Esophagus muscularis mucosa (tissue), 4 donors: ENCODE measurements at regions of chr3 and their contacts with region 1.

Region 1: DNA sequence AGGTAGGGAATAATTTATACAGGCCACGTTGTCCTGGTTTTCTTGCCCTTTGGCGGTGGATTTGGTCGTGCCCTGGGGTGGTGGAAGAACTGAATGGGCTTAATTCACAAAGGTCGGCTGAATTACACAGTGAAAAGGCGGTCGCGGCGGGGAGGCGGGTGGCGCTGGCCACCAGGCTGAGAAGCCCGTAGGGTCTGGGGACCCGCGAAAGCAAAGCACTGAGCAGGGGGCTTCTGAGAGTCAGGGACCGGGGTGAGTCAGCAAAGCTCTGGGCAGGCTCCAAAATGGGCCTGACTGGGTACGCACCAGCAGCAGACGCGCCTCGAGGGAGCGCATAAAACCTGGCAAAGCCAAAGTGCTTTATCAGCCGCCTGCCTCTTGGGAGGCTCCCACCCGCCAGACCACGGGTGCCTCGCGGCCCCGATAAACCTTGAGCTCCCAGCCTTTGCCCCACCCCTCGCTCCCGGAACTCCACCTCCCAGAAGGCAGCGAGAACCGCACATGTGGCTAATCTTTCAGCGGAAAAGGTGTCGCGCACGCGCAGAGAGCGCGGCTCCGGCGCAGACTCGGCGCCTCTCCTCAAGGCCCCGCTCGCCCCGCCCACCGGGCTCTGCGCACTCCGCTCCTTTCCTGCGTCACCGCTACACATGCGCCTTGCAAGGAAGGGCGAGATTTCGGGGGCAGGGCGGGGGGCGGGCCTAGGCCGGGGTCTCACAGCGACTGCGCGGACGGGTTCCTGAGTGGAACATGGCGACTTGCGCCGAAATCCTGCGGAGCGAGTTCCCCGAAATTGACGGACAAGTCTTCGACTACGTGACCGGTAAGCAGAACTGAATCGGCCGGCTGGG is at the start of gene ABCF3:
- DNase-seq: peak; percentile 100
- H3K4me3 ChIP-seq: peak within 1 kb of the TSS; percentile 77 to 90 (median 84)
- H3K27ac ChIP-seq: peak within 1 kb of the TSS; percentile 82 to 88 (median 86)
- H3K4me1 ChIP-seq: peaks cover 32 to 38% (median 36%) of the 10 kb centered on the region in 4 donors
- H3K27me3 ChIP-seq: no peaks in the 10 kb centered on the region
- CTCF ChIP-seq: no peak
- EP300 ChIP-seq: no peak
- POLR2A ChIP-seq: peak; percentile 87
- total RNA-seq, gene ABCF3: 34.8 to 43.2 (median 36.9) TPM

Region 2: GRCh38 chr3:183930086-183930485 is 255.6 kb before region 1 on chr3:
- intact Hi-C with region 1: no loop called
- DNase-seq: no peak
- H3K4me3 ChIP-seq: no peak overlapping the region
- H3K27ac ChIP-seq: no peak overlapping the region
- H3K4me1 ChIP-seq: no peaks in the 10 kb centered on the region
- H3K27me3 ChIP-seq: no peaks in the 10 kb centered on the region
- CTCF ChIP-seq: no peak
- EP300 ChIP-seq: no peak
- POLR2A ChIP-seq: no peak

Region 3: GRCh38 chr3:184145111-184145524 is 40.6 kb before region 1 on chr3:
- intact Hi-C with region 1: loop called (anchors 5 kb)
- DNase-seq: no peak
- H3K4me3 ChIP-seq: no peak overlapping the region
- H3K27ac ChIP-seq: peak overlapping the region in 1 of 4 donors; percentile 22
- H3K4me1 ChIP-seq: peaks cover 4 to 11% (median 8%) of the 10 kb centered on the region in 4 donors
- H3K27me3 ChIP-seq: no peaks in the 10 kb centered on the region
- CTCF ChIP-seq: peak; percentile 43 to 53 (median 47)
- EP300 ChIP-seq: no peak
- POLR2A ChIP-seq: no peak

Region 4: DNA sequence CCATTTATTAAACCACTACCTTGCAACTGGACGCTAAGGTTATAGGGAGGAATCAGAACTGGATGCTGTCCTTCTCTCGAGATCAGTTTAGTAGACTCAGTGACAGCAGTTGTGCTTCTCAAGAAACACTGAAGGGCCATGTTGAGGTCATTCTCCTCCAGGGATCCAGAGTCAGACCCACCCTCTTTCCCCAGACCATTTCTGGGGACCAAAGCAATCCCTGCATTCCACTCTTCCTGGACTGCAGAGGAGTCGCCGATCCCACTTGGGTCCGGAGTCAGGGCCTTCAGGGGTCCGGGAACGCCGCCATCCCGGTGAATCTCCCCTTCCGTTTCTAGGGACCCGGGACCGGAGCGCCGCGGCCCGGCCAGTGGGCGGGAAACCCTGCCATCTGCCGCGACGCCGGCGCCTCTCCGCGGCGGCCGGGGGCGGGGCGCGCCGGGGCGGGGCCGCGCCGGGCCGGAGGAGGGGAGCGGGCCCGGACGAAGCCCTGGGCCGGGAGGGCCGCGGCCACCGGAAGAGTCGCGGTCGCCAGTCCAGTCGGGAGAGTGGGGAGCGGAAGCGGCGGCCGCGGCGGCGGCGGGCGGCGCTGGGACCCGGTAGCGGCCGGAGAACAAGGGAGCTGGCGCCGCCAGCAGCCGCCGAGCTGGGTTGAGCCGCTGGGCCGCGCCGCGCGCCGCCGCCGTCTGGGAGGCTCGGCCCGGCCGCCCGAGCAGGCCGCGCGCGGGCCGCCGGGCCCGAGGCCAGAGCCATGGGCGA is 30.6 kb before region 1 on chr3 and contains the start of gene DVL3:
- intact Hi-C with region 1: loop called (anchors 1 kb)
- DNase-seq: no peak
- H3K4me3 ChIP-seq: peak within 1 kb of the TSS; percentile 70 to 98 (median 96)
- H3K27ac ChIP-seq: peak within 1 kb of the TSS; percentile 89 to 96 (median 95)
- H3K4me1 ChIP-seq: peaks cover 49 to 55% (median 54%) of the 10 kb centered on the region in 4 donors
- H3K27me3 ChIP-seq: no peaks in the 10 kb centered on the region
- CTCF ChIP-seq: no peak
- EP300 ChIP-seq: no peak
- POLR2A ChIP-seq: no peak
- total RNA-seq, gene DVL3: 64.0 to 119 (median 86.3) TPM

Region 5: DNA sequence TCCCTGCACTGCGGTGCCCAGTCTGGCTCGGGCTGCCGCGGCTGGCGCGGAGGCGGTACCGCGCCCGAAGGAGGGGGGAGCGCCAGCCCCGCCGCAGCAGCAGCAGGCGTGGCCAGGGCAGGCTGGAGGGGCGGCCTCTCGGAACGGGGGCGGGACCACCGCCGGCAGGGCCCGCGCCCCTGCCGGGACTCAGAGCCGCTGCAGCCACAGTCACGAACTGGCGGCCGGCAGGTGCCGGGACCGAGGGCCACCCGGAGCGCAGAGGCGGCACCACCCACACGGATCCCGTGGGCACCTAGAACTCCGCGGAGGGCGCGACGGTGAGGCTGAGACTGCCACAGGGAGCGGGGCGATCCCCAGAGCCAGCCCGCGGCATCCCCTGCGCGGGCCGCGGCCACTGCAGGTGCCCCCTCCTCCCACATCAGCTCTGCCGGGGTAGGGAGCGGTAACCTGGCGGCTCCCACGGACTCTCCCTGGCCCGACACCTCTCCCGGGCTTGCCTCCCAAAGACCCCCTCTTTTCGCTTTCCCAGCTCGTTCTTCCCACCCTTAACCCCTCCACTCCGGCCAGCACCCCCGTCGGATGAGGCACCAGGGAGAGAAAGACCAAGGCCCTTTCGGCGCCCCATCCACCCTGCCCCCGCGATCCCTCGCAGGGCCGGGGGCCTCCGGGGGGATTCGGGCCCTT is 43.9 kb after region 1 on chr3 and contains the start of gene VWA5B2:
- intact Hi-C with region 1: loop called (anchors 5 kb)
- DNase-seq: no peak
- H3K4me3 ChIP-seq: peak within 1 kb of the TSS; percentile 52 to 65 (median 56)
- H3K27ac ChIP-seq: no peak within 1 kb of the TSS
- H3K4me1 ChIP-seq: peaks cover 23 to 30% (median 26%) of the 10 kb centered on the region in 4 donors
- H3K27me3 ChIP-seq: peaks cover 4 to 92% (median 31%) of the 10 kb centered on the region in 4 donors
- CTCF ChIP-seq: peak in 2 of 3 experiments; percentile 11 to 38
- EP300 ChIP-seq: no peak
- POLR2A ChIP-seq: no peak
- total RNA-seq, gene VWA5B2: 0.17 to 0.33 (median 0.32) TPM in 3 of 4 donors, not detected in the other

Region 6: DNA sequence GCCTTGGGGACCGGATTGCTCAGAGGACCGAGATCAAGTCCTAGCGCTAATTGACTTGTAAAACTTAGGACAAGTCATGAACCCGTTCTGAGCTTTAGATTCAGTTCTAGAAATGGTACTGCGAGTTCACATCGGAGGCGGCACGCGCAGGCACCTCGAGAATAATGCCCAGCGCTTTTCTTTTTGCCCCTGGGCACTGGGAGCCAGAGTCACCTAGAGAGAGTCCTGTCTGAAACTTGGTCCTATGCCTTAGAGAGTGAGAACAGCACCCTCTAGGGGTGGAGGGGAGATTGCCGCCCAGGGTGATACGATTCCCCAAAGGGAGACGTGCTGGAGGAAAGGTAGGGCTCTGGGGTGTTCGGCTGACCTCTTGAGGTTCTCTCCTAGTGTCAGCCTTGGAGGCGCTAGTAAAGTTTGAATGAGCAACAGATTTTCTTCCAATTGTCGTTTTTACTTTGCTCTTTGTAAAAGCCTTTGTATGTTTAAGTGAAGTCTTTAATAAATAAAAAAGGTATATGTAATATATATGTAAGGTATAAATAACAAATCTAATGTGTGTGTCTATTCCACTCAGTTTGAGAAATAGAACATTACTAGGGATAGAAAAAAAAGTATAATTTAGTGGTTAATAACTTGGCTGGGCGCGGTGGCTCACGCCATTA is 64.6 kb after region 1 on chr3:
- intact Hi-C with region 1: loop called (anchors 5 kb)
- DNase-seq: peak; percentile 96
- H3K4me3 ChIP-seq: peak overlapping the region; percentile 77 to 93 (median 86)
- H3K27ac ChIP-seq: peak overlapping the region; percentile 74 to 84 (median 81)
- H3K4me1 ChIP-seq: peaks cover 14 to 35% (median 23%) of the 10 kb centered on the region in 4 donors
- H3K27me3 ChIP-seq: no peaks in the 10 kb centered on the region
- CTCF ChIP-seq: peak; percentile 87 to 98 (median 91)
- EP300 ChIP-seq: no peak
- POLR2A ChIP-seq: no peak

Region 7: GRCh38 chr3:184298759-184299496 is 113.2 kb after region 1 on chr3 and contains the start of gene PSMD2:
- intact Hi-C with region 1: loop called (anchors 5 kb)
- DNase-seq: peak; percentile 99
- H3K4me3 ChIP-seq: peak within 1 kb of the TSS; percentile 81 to 90 (median 83)
- H3K27ac ChIP-seq: peak within 1 kb of the TSS; percentile 78 to 88 (median 82)
- H3K4me1 ChIP-seq: peaks cover 14 to 37% (median 23%) of the 10 kb centered on the region in 4 donors
- H3K27me3 ChIP-seq: no peaks in the 10 kb centered on the region
- CTCF ChIP-seq: no peak
- EP300 ChIP-seq: no peak
- POLR2A ChIP-seq: peak; percentile 76
- total RNA-seq, gene PSMD2: 252 to 356 (median 274) TPM